Mammary epithelial cell (primary cell): ENCODE measurements at regions of chr3 and their contacts with region 1.

Region 1: GRCh38 chr3:16247276-16248061 is 17.3 kb downstream of the DPH3 start:
- DNase-seq: peak; percentile 63
- H3K4me3 ChIP-seq: no peak overlapping the region
- H3K27ac ChIP-seq: no peak overlapping the region
- H3K4me1 ChIP-seq: no peaks in the 10 kb centered on the region
- H3K27me3 ChIP-seq: no peaks in the 10 kb centered on the region
- CTCF ChIP-seq: peak; percentile 89 to 95

Region 2: GRCh38 chr3:15601397-15602145 is 645.9 kb before region 1 on chr3 and contains the starts of genes BTD and HACL1:
- CTCF ChIA-PET with region 1: no interaction called
- dilution Hi-C with region 1: no loop called
- in situ Hi-C with region 1: loop called in 1 of 2 experiments (anchors 25 kb)
- intact Hi-C with region 1: no loop called
- DNase-seq: peak; percentile 99
- H3K4me3 ChIP-seq: peak within 1 kb of the TSS; percentile 62 to 94 (median 74)
- H3K27ac ChIP-seq: peak within 1 kb of the TSS; percentile 79
- H3K4me1 ChIP-seq: peaks cover 9% of the 10 kb centered on the region
- H3K27me3 ChIP-seq: no peaks in the 10 kb centered on the region
- CTCF ChIP-seq: peak in 1 of 2 donors; percentile 38
- total RNA-seq, gene BTD: 8.0 to 21.7 TPM
- total RNA-seq, gene HACL1: 17.4 to 22.5 TPM

Region 3: GRCh38 chr3:15815696-15816095 is 431.8 kb before region 1 on chr3:
- CTCF ChIA-PET with region 1: no interaction called
- dilution Hi-C with region 1: no loop called
- in situ Hi-C with region 1: loop called in 1 of 2 experiments (anchors 10 kb)
- intact Hi-C with region 1: loop called (anchors 1 kb)
- DNase-seq: peak; percentile 41
- H3K4me3 ChIP-seq: no peak overlapping the region
- H3K27ac ChIP-seq: no peak overlapping the region
- H3K4me1 ChIP-seq: peaks cover 9% of the 10 kb centered on the region
- H3K27me3 ChIP-seq: no peaks in the 10 kb centered on the region
- CTCF ChIP-seq: peak in 1 of 2 donors; percentile 31

Region 4: DNA sequence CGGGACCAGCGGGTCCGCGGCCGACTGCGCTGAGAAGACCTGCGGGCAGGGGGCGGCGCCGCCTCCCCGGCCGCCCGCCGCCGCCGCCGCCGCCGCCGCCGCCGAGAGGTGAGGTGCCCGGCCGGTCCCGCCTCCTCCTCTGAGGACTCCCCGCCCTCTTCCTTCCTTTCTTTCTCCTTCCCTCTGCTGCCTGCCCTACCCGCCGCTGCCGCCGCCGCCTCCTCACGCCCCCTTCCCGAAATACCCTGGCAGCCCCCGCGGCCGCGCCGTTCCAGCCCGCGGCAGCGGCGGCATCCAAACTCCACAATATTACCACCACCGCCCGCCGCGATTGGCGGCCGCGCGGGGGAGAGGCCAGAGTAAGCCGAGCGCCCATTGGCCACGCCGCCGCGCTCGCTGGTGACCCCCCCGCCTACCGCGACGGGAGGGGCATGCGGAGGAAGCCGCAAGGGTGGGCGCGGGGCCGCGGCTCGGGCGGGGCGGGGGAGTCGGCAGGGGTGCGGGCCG is 387.9 kb before region 1 on chr3:
- CTCF ChIA-PET with region 1: no interaction called
- dilution Hi-C with region 1: no loop called
- in situ Hi-C with region 1: no loop called
- intact Hi-C with region 1: loop called (anchors 1 kb)
- DNase-seq: peak; percentile 89
- H3K4me3 ChIP-seq: peak overlapping the region; percentile 66 to 88 (median 80)
- H3K27ac ChIP-seq: peak overlapping the region; percentile 63
- H3K4me1 ChIP-seq: peaks cover 9% of the 10 kb centered on the region
- H3K27me3 ChIP-seq: no peaks in the 10 kb centered on the region
- CTCF ChIP-seq: no peak

Region 5: GRCh38 chr3:16060358-16060852 is 187.1 kb before region 1 on chr3:
- CTCF ChIA-PET with region 1: no interaction called
- dilution Hi-C with region 1: no loop called
- in situ Hi-C with region 1: no loop called
- intact Hi-C with region 1: loop called (anchors 5 kb)
- DNase-seq: peak; percentile 97
- H3K4me3 ChIP-seq: no peak overlapping the region
- H3K27ac ChIP-seq: peak overlapping the region; percentile 77
- H3K4me1 ChIP-seq: peaks cover 34% of the 10 kb centered on the region
- H3K27me3 ChIP-seq: no peaks in the 10 kb centered on the region
- CTCF ChIP-seq: peak; percentile 10 to 39

Region 6: DNA sequence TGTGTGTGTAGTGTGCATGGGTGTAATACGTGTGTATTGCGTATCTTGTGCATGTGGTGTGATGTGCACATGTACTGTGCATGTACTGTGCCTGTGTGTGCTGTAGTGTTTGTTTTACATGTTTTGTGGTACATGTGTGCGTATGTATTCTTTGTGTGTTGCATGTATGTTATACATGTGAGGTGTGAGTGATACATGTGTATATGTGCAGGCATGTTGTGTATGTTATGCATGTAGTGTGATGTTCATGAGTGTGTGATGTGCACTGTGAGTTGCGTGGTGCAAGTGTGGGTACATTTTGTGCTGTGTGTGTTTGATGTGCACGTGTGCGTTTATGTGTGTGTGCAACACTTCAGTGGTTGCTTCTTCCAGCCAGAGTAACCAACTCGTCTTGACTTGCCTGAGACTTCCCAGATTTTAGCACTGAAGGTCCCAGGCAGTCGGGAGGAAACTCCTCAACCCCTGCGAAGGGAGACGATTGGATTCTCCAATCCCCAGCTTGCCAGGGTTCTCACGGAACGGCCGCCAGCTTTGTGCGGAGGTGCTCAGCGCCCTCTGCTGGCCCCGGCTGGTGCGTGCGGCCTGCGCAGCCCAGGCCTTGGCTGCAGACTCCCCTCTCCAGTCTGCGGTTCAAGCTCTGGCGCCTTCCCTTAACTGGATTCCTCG is 69.4 kb before region 1 on chr3:
- CTCF ChIA-PET with region 1: no interaction called
- dilution Hi-C with region 1: no loop called
- in situ Hi-C with region 1: loop called in 1 of 2 experiments (anchors 10 kb)
- intact Hi-C with region 1: loop called (anchors 1 kb)
- DNase-seq: peak; percentile 62
- H3K4me3 ChIP-seq: no peak overlapping the region
- H3K27ac ChIP-seq: no peak overlapping the region
- H3K4me1 ChIP-seq: peaks cover 5% of the 10 kb centered on the region
- H3K27me3 ChIP-seq: peaks cover 4% of the 10 kb centered on the region
- CTCF ChIP-seq: peak; percentile 93 to 99